GM13976 (cell line): ENCODE measurements at regions of chr12 and their contacts with region 1.

Region 1: DNA sequence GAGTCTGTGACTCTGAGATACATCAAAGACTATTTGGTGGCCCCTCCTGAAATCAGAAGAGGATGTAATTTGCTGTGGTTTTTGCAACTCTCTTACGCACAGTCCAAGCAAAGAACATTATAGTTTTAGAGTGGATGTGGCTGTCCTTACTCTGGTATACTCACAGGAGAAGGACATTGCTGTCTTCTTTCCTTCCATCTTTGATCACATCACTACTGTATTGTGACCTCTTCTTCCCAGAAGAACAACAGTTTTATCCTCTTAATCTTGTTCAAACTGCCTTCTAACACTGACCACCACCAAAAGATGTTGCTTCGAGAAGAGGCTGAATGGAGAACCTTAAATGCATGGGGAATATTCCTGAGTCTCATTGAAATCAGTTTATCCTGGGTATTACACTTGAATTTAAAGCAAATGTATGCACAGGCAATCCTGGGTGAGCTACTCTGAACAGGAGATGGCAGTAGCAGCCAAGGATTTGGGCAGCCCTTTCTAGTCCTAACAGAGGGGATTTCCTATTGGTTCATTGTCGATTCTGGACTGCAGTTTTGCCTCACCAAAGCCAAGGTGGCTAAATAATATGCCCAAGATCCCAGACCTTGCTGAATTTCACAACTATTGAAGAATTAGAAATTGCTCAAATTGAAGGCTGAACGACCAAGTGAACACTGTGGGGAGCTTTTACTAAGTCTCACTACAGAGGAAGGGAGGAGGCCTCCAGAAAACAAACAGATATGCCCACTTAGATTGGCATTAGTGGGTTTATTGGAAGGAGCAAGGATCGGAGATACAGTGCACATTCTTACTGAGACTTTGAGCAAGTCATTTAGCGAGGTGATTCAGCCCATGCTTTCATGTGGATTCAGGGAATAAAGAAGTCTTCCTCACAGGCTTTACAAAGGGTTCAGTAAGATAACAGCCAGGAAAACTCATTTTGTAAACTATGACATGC is 282.8 kb downstream of the PAWR start:
- DNase-seq: peak; percentile 20
- CTCF ChIP-seq: peak; percentile 58

Region 2: GRCh38 chr12:79737875-79738718 is 330.1 kb after region 1 on chr12:
- in situ Hi-C with region 1: loop called (anchors 10 kb)
- DNase-seq: peak; percentile 45
- CTCF ChIP-seq: peak; percentile 42